ENCODE measurements at regions of chr2 and their contacts with region 1.

Region 1: DNA sequence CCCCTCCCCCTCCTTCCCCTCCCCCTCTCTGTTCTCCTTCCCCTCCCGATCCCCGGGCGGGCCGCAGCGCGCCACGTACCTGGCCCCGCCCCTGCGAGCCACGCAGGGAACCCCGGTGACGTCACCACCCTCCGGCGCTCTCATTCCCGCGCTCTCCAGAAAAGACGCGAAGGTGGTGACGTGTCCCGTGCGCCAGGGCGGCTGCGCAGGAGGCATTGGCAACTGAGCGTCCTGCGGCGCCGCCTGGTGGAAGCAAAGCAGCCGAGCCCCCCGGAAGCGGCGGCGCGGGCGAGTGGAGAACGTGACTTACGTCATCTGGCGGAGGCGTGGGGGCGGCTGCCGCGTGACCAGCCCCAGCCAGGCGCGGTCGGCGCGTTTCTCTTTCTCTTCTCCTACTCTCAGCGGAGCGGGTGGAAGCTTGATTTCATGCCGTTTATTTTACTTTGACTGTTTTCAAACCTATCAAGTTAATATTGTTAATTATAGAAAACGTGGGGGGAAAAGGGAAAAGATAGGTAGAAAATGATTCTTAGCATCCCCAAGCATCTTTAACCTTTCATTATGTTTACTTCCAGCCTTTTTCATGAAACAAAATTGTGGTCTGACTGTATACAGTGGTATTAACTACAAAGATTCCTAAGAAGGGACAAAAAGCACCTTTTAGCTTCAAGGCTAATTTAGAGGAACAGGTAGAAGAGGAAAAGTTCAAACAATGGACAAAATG is 48.1 kb downstream of the C2orf42 start:
- DNase-seq: peak; percentile 100
- ATAC-seq: peak; percentile 70
- H3K4me3 Mint-ChIP-seq: peak overlapping the region; percentile 86
- H3K27ac Mint-ChIP-seq: peak overlapping the region; percentile 100
- H3K4me1 Mint-ChIP-seq: peaks cover 37% of the 10 kb centered on the region
- H3K27me3 Mint-ChIP-seq: no peaks in the 10 kb centered on the region
- CTCF ChIP-seq: no peak

Region 2: GRCh38 chr2:69893684-69894551 is 248.8 kb before region 1 on chr2 and contains the start of gene SNRNP27:
- CTCF ChIA-PET with region 1: no interaction called
- POLR2A ChIA-PET with region 1: interaction called, 13 read pairs
- intact Hi-C with region 1: no loop called
- DNase-seq: peak; percentile 69
- ATAC-seq: peak; percentile 88
- H3K4me3 Mint-ChIP-seq: peak within 1 kb of the TSS; percentile 100
- H3K27ac Mint-ChIP-seq: peak within 1 kb of the TSS; percentile 98
- H3K4me1 Mint-ChIP-seq: peaks cover 43% of the 10 kb centered on the region
- H3K27me3 Mint-ChIP-seq: no peaks in the 10 kb centered on the region
- CTCF ChIP-seq: no peak
- total RNA-seq, gene SNRNP27: 43.0 and 49.1 TPM in 2 replicates

Region 3: GRCh38 chr2:69926849-69927515 is 215.8 kb before region 1 on chr2:
- CTCF ChIA-PET with region 1: no interaction called
- POLR2A ChIA-PET with region 1: no interaction called
- intact Hi-C with region 1: no loop called
- DNase-seq: no peak
- ATAC-seq: no peak
- H3K4me3 Mint-ChIP-seq: no peak overlapping the region
- H3K27ac Mint-ChIP-seq: no peak overlapping the region
- H3K4me1 Mint-ChIP-seq: peaks cover 3% of the 10 kb centered on the region
- H3K27me3 Mint-ChIP-seq: no peaks in the 10 kb centered on the region
- CTCF ChIP-seq: no peak

Region 4: DNA sequence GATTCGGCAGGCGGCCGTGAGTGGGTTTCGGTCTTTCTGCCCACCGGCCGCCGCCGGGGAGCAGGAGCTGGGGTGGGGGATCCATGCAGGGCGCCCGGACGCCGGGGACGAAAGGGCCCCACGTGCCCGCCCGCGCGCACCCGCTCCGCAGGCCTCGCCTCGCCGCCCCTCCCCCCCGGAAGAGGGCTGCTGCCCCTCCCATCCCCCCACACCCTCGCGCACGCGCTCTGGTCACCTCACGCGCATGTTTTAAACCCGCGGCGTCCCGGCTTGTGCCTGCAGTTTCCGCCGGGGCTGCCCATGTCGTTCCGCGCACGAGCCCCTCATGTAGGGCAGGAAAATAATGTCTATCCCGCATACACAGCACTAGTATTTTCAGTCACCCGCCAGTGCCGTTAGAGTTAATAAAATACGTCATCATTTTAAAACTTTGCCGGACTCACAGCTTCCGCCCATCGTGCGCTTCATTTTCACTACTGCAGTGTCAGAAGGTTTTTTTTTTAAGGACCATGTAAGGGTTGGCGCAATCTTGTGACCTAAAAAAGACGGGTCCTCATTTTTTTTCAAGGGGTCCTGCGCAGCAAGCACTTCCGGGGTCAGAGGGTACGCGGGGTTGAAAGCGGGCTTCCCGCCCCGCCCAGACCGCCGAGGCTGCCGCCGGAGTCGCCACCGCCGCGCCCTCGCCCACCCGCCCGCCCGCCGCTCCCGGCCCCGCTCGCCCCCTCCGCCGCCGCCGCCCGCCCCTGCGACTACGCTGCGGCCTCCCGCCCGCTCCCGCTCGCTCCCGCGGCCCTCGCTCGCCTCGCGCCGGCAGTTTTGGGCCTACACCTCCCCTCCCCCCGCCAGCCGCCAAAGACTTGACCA is 55.7 kb before region 1 on chr2 and contains the start of gene PCBP1:
- CTCF ChIA-PET with region 1: interaction called, 6 read pairs
- POLR2A ChIA-PET with region 1: interaction called, 976 read pairs
- intact Hi-C with region 1: loop called (anchors 1 kb)
- DNase-seq: peak; percentile 96
- ATAC-seq: peak; percentile 54
- H3K4me3 Mint-ChIP-seq: peak within 1 kb of the TSS; percentile 96
- H3K27ac Mint-ChIP-seq: peak within 1 kb of the TSS; percentile 100
- H3K4me1 Mint-ChIP-seq: peaks cover 70% of the 10 kb centered on the region
- H3K27me3 Mint-ChIP-seq: no peaks in the 10 kb centered on the region
- CTCF ChIP-seq: no peak
- total RNA-seq, gene PCBP1: 370 and 379 TPM in 2 replicates

Region 5: DNA sequence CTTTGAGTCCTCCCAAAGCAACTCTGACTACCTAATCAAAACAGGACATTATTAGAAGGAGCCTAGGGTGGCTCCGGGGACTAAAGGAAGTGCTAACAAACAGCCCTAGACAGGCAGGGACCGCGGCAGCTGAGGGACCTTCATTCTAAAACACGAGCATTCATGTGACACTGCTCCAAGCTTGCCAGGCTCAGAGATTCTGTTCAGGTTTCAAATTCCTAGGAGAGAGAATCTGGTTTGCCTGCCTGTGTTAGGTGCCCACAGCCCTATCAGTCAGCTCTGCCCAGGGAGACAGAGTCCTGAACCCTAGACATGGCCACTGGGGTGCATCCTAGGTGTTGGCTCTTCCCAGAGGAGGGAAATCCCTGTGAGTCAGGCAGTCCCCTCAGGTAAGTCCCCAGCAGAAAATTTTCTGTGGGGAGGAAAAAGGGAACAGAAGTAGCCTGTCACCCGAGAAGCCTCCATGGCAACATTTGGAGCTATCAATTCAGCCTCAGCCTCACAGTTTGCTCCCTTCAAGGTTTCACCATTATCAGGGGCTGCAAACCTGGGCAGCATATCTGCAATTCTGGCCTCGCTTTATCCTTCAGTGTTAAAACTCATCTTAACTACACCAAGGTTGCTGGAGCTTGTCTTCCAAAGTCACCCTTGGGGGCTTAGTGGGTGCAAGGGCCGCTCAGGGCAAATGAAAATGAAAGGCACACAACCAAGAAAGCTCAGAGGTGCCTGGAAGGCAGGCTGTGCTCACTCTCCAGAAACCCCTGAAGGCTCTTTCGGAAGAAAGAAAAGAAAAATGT is 26.9 kb before region 1 on chr2:
- CTCF ChIA-PET with region 1: interaction called, 3 read pairs
- POLR2A ChIA-PET with region 1: interaction called, 358 read pairs
- intact Hi-C with region 1: no loop called
- DNase-seq: no peak
- ATAC-seq: peak; percentile 54
- H3K4me3 Mint-ChIP-seq: peak overlapping the region; percentile 46
- H3K27ac Mint-ChIP-seq: peak overlapping the region; percentile 73
- H3K4me1 Mint-ChIP-seq: peaks cover 49% of the 10 kb centered on the region
- H3K27me3 Mint-ChIP-seq: no peaks in the 10 kb centered on the region
- CTCF ChIP-seq: no peak

Region 6: DNA sequence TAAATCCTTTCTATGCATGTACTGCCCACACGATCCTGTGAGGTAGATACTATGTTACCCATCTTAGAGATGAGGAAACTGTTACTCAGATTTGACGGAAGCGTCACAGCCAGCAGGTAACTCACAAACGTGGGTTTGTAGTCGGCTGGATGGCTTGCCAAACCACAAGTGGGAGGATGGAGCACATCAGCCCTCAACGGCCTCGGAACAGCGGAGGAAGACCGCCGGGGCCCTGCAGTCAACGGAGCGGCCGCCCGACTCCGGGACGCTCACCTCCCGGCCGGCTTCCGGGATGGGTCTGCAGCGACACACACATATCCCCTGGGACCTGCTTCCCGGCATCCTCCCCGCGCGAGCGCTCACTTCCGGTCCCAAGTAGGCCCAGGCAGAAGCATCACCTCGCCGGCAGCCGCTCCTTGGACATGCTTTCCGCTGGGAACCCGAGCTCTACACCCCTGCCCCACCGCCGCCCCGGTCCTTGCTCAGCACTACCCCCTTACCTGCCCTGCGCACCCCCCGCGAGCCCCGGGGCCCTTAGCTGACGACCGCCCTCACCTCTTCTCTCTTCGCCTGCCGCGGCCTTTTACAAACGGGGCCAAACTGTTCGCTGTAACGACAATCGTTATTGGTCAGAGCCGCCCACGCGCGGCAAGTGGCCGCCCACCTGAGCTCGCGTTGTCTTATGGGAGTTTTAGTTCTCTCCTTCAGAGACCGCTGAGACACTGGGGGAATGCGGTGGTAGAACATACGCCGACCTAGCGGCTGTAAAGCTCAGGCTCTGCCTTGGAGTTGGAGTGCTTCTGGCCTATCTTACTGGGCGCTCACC is 47.9 kb after region 1 on chr2 and contains the start of gene C2orf42:
- CTCF ChIA-PET with region 1: interaction called, 4 read pairs
- POLR2A ChIA-PET with region 1: interaction called, 44 read pairs
- intact Hi-C with region 1: loop called (anchors 1 kb)
- DNase-seq: peak; percentile 93
- ATAC-seq: peak; percentile 86
- H3K4me3 Mint-ChIP-seq: peak within 1 kb of the TSS; percentile 98
- H3K27ac Mint-ChIP-seq: peak within 1 kb of the TSS; percentile 100
- H3K4me1 Mint-ChIP-seq: peaks cover 17% of the 10 kb centered on the region
- H3K27me3 Mint-ChIP-seq: no peaks in the 10 kb centered on the region
- CTCF ChIP-seq: no peak
- total RNA-seq, gene C2orf42: 28.4 and 34.8 TPM in 2 replicates

Region 7: GRCh38 chr2:70580352-70580751 is 437.6 kb after region 1 on chr2:
- CTCF ChIA-PET with region 1: no interaction called
- POLR2A ChIA-PET with region 1: no interaction called
- intact Hi-C with region 1: no loop called
- DNase-seq: no peak
- ATAC-seq: no peak
- H3K4me3 Mint-ChIP-seq: no peak overlapping the region
- H3K27ac Mint-ChIP-seq: no peak overlapping the region
- H3K4me1 Mint-ChIP-seq: no peaks in the 10 kb centered on the region
- H3K27me3 Mint-ChIP-seq: peaks cover 7% of the 10 kb centered on the region
- CTCF ChIP-seq: no peak

Region 8: DNA sequence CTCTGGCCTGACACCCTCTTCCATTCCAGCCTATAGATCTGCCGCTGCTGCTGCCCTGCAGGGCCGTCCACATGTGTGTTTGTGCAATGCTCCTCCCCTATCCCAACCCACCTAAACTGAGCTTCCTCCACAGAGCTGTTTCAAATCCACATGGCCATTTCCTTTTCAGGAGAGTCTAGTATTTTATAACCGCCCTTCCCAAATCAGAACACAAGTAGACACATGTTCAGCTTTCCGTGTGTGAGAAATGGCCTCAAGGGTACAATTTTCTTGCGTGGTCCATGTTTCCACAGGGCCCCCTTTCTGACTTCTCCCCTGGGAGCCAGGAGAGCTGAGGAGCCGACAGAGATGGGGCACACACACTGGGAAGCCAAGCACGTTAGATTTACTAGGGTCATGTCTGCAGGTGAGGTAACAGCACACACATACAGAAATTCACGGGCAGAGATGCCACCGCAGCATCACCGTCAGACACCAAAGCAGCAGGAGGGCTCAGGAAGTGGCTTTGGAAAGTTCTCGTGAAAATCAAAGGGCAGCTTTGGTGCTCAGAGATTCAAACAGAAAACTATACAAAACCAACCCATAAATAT is 513.8 kb after region 1 on chr2:
- CTCF ChIA-PET with region 1: no interaction called
- POLR2A ChIA-PET with region 1: no interaction called
- intact Hi-C with region 1: no loop called
- DNase-seq: no peak
- ATAC-seq: no peak
- H3K4me3 Mint-ChIP-seq: no peak overlapping the region
- H3K27ac Mint-ChIP-seq: no peak overlapping the region
- H3K4me1 Mint-ChIP-seq: no peaks in the 10 kb centered on the region
- H3K27me3 Mint-ChIP-seq: peaks cover 23% of the 10 kb centered on the region
- CTCF ChIP-seq: no peak